ENCODE measurements at regions of chr1 and their contacts with region 1.

Region 1: GRCh38 chr1:160830321-160831153 is 32.1 kb downstream of the CD244 start:
- DNase-seq: peak; percentile 86
- H3K4me3 Mint-ChIP-seq: no peak overlapping the region
- H3K27ac Mint-ChIP-seq: no peak overlapping the region
- H3K4me1 Mint-ChIP-seq: peaks cover 12% of the 10 kb centered on the region
- H3K27me3 Mint-ChIP-seq: no peaks in the 10 kb centered on the region

Region 2: GRCh38 chr1:160499631-160500030 is 330.9 kb before region 1 on chr1:
- CTCF ChIA-PET with region 1: no interaction called
- POLR2A ChIA-PET with region 1: no interaction called
- intact Hi-C with region 1: no loop called
- DNase-seq: no peak
- H3K4me3 Mint-ChIP-seq: no peak overlapping the region
- H3K27ac Mint-ChIP-seq: peak overlapping the region; percentile 38
- H3K4me1 Mint-ChIP-seq: peaks cover 75% of the 10 kb centered on the region
- H3K27me3 Mint-ChIP-seq: no peaks in the 10 kb centered on the region

Region 3: DNA sequence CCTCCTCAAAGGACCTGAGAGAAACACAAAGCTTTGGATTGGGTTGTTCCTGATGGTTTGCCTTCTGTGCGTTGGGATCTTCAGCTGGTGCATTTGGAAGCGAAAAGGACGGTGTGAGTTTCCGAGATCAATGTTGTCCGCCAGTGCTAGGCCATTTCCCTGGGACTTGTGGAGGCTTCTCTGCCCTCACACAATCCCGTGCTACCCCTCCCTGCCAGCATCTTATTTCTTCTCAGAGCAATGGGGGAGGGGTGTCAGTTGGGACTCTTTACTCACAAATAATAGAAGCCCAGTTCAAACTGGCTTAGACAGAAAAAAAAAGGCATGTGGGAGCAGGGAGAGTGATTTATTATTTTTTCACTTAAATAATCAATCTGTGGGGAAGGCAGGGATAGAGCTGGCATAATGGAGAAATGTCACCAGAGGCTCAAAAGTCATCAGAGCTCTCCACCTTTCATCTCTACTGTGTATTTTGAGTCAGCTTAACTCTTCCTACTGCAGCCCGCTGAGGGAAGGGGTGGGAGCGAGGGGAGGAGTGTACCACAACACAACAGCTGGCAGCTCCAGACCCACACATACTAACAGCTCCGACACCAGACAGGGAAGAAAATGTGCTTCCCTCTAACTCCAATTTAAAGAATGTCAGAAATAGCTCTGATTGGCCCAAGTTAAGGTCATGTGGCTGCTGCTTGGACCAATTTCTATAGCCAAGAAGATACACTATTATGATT is 12.2 kb before region 1 on chr1:
- CTCF ChIA-PET with region 1: interaction called, 10 read pairs
- POLR2A ChIA-PET with region 1: no interaction called
- intact Hi-C with region 1: no loop called
- DNase-seq: no peak
- H3K4me3 Mint-ChIP-seq: no peak overlapping the region
- H3K27ac Mint-ChIP-seq: no peak overlapping the region
- H3K4me1 Mint-ChIP-seq: peaks cover 4% of the 10 kb centered on the region
- H3K27me3 Mint-ChIP-seq: no peaks in the 10 kb centered on the region

Region 4: DNA sequence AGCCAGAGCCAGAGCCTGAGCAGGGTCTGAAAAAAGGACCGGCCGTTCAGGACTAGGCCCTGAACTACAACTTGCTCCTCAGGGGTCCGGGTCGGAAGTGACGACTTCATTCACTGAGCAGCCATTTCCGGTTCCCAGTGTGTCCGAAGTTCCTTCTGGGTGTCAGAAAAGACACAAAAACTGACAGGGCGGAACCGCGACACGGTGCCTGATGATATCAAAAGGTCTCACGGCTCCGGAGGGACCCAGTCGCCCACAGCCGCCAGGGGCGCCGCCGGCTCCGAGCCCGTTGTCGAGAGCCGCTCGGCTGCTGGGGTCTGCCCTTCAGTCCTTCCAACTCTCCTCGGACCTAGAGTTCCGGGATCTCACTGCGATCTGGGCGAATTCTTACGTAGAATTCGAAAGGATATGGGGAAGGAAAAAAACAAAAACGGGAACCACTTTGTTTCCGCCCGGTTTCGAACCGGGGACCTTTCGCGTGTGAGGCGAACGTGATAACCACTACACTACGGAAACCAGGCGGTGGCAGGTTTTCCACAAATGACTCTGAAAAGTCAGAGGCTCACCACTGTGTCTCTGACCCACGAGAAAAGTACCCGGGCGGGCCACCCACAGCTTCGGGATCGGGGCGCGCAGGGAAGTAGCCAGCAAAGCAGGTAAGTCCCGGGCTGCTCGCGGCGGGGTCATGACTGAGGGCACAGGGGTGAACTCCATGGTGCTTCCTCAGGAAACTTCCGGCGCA is 568.9 kb after region 1 on chr1:
- CTCF ChIA-PET with region 1: no interaction called
- POLR2A ChIA-PET with region 1: no interaction called
- intact Hi-C with region 1: no loop called
- DNase-seq: peak; percentile 94
- H3K4me3 Mint-ChIP-seq: peak overlapping the region; percentile 93
- H3K27ac Mint-ChIP-seq: peak overlapping the region; percentile 99
- H3K4me1 Mint-ChIP-seq: peaks cover 37% of the 10 kb centered on the region
- H3K27me3 Mint-ChIP-seq: peaks cover 3% of the 10 kb centered on the region

Measured in activated CD4-positive, alpha-beta memory T cell treated with anti-CD3 and anti-CD28 coated beads for 36 hours (primary cell).